ENCODE measurements at regions of chr2 and their contacts with region 1.

Region 1: DNA sequence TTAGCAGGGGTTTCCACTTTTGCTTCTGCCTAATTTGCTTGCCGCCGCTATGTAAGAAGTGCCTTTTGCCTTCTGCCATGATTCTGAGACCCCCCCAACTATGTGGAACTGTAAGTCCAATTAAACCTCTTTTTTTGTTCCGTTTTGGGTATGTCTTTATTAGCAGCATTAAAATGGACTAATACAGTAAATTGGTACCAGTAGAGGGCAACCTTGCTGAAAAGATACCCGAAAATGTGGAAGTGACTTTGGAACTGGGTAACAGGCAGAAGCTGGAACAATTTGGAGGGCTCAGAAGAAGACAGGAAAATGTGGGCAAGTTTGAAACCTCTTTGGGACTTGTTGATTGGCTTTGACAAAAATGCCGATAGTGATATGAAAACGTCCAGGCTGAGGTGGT is 216.1 kb upstream of the FSIP2 start:
- DNase-seq: peak; percentile 8
- ATAC-seq: no peak
- H3K4me3 ChIP-seq: no peak overlapping the region
- H3K27ac ChIP-seq: no peak overlapping the region
- H3K4me1 ChIP-seq: no peaks in the 10 kb centered on the region
- H3K27me3 ChIP-seq: no peaks in the 10 kb centered on the region
- CTCF ChIP-seq: peak; percentile 44
- EP300 ChIP-seq: no peak
- POLR2A ChIP-seq: no peak
- RAD21 ChIP-seq: no peak

Region 2: GRCh38 chr2:185291035-185291647 is 231.3 kb before region 1 on chr2:
- CTCF ChIA-PET with region 1: no interaction called
- POLR2A ChIA-PET with region 1: no interaction called
- in situ Hi-C with region 1: no loop called
- intact Hi-C with region 1: loop called (anchors 1 kb)
- DNase-seq: peak; percentile 64
- ATAC-seq: peak; percentile 100
- H3K4me3 ChIP-seq: no peak overlapping the region
- H3K27ac ChIP-seq: no peak overlapping the region
- H3K4me1 ChIP-seq: peaks cover 10% of the 10 kb centered on the region
- H3K27me3 ChIP-seq: no peaks in the 10 kb centered on the region
- CTCF ChIP-seq: peak; percentile 74
- EP300 ChIP-seq: no peak
- POLR2A ChIP-seq: no peak
- RAD21 ChIP-seq: peak; percentile 74

Region 3: GRCh38 chr2:185507719-185508118 is 14.8 kb before region 1 on chr2:
- CTCF ChIA-PET with region 1: no interaction called
- POLR2A ChIA-PET with region 1: no interaction called
- in situ Hi-C with region 1: no loop called
- intact Hi-C with region 1: no loop called
- DNase-seq: no peak
- ATAC-seq: no peak
- H3K4me3 ChIP-seq: no peak overlapping the region
- H3K27ac ChIP-seq: no peak overlapping the region
- H3K4me1 ChIP-seq: no peaks in the 10 kb centered on the region
- H3K27me3 ChIP-seq: no peaks in the 10 kb centered on the region
- CTCF ChIP-seq: no peak
- EP300 ChIP-seq: no peak
- POLR2A ChIP-seq: no peak
- RAD21 ChIP-seq: no peak

Region 4: DNA sequence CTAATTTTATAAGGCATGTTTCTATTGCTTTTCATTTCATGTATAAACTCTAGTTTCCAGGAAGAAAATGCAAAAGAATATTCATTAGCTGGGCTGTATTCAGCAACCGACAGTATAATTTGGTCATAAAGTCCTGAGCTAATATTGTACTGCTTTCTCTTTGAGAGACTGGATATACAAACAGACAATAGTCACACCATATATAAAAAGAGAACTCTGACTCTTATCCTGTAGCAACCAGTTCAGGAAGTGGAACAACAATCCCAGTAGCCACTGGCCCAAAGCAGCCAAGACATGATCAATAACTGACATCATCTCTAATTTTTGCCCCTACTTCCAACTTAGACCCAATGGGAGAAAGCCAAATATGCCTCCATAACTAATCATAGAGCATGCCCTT is 376.9 kb after region 1 on chr2:
- CTCF ChIA-PET with region 1: no interaction called
- POLR2A ChIA-PET with region 1: no interaction called
- in situ Hi-C with region 1: no loop called
- intact Hi-C with region 1: no loop called
- DNase-seq: no peak
- ATAC-seq: no peak
- H3K4me3 ChIP-seq: no peak overlapping the region
- H3K27ac ChIP-seq: no peak overlapping the region
- H3K4me1 ChIP-seq: peaks cover 12% of the 10 kb centered on the region
- H3K27me3 ChIP-seq: no peaks in the 10 kb centered on the region
- CTCF ChIP-seq: no peak
- EP300 ChIP-seq: no peak
- POLR2A ChIP-seq: no peak
- RAD21 ChIP-seq: no peak

Measured in HepG2 (cell line).